ENCODE measurements at regions of chr2 and their contacts with region 1.

Region 1: DNA sequence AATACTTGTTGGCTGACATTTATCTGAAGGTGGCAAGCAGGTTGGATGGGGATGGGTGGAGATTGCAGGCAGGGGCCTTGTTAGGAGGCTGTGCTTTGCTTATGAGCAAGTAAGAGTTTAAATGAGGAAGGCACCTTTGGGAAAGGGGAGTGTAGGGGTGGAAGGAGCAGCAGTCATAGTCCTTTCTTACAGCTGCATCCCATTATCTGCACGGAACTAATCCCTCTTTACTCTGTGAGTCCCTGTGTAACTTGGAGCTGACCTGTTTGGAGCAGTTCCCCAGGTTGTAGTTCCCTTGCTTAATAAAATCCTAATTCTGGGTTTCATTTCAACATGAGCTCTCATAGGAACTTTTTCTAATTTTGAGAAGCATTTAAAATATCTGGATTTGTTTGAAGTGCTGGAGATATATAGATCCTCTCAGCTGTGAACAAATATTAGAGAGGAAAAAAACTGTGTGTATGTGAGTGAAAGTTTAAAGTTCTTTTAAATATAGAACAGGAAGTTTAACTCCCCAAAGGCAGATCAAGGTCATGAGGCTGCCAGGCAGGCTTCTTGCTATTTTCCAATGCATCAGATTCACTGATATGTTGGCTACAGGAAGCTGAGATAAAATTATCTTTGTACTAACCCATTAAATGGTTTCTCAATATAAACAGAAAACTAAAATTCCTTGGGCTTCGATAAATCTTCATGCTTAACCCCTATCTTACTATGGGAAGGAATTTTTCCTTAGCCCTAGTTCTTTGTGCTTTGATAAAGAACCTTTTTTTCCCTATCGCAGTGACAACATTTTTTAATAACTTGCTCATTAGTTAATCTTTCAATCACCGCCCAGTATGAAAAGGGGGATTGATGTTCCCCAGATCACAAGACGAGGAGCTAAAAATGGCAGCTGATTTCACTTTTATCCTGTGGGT is 104.6 kb upstream of the EML6 start:
- DNase-seq: no peak
- H3K4me3 ChIP-seq: no peak overlapping the region
- H3K4me3 Mint-ChIP-seq: peak overlapping the region in 3 of 8 donors; percentile 3 to 46 (median 37)
- H3K27ac ChIP-seq: no peak overlapping the region
- H3K27ac Mint-ChIP-seq: peak overlapping the region; percentile 10 to 89 (median 68)
- H3K4me1 ChIP-seq: peaks cover 17% of the 10 kb centered on the region
- H3K4me1 Mint-ChIP-seq: peaks cover 19 to 36% (median 24%) of the 10 kb centered on the region in 4 donors
- H3K27me3 ChIP-seq: no peaks in the 10 kb centered on the region
- H3K27me3 Mint-ChIP-seq: no peaks in the 10 kb centered on the region

Region 2: GRCh38 chr2:54295911-54296310 is 323.0 kb before region 1 on chr2:
- CTCF ChIA-PET with region 1: no interaction called
- POLR2A ChIA-PET with region 1: no interaction called
- intact Hi-C with region 1: no loop called
- DNase-seq: no peak
- H3K4me3 ChIP-seq: no peak overlapping the region
- H3K4me3 Mint-ChIP-seq: no peak overlapping the region
- H3K27ac ChIP-seq: no peak overlapping the region
- H3K27ac Mint-ChIP-seq: no peak overlapping the region
- H3K4me1 ChIP-seq: no peaks in the 10 kb centered on the region
- H3K4me1 Mint-ChIP-seq: peaks cover 0 to 1% (median 0%) of the 10 kb centered on the region in 4 donors
- H3K27me3 ChIP-seq: no peaks in the 10 kb centered on the region
- H3K27me3 Mint-ChIP-seq: no peaks in the 10 kb centered on the region

Region 3: DNA sequence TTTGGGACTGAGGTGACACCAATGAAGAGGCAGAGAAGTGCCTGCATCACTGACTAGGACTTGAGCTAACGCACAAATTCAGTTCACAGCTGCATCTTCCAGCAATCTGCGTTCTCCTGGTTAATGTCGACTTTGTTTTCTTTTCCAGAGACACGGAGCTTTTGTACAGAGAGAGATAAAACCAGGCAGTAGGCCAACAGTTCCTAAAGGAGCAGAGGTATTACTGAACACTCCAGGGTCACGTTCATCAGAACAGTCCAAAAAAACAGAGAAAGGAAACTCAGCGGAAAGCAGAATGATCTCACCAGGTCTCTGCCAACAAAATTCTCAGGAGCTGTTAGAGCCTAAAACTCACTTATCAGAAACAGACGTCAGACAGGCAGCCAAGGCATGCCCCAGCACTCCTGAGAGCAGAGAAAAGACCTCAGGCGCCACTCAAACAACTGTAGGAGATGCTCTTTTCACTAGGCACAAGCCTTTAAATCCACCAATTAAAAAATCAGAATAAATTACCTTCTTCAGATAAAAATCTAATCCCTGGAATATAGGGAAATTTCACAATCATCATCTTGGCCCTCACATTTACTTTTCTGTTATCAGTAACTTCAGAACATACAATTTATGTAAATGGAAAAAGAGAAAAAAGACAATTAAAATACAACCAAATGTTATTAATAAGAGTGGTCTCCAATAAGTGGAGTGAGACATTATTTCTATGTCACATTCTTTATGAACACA is 258.7 kb before region 1 on chr2:
- CTCF ChIA-PET with region 1: no interaction called
- POLR2A ChIA-PET with region 1: no interaction called
- intact Hi-C with region 1: no loop called
- DNase-seq: no peak
- H3K4me3 ChIP-seq: no peak overlapping the region
- H3K4me3 Mint-ChIP-seq: no peak overlapping the region
- H3K27ac ChIP-seq: no peak overlapping the region
- H3K27ac Mint-ChIP-seq: no peak overlapping the region
- H3K4me1 ChIP-seq: no peaks in the 10 kb centered on the region
- H3K4me1 Mint-ChIP-seq: no peaks in the 10 kb centered on the region
- H3K27me3 ChIP-seq: no peaks in the 10 kb centered on the region
- H3K27me3 Mint-ChIP-seq: peaks cover 15 to 17% of the 10 kb centered on the region in 2 donors

Region 4: DNA sequence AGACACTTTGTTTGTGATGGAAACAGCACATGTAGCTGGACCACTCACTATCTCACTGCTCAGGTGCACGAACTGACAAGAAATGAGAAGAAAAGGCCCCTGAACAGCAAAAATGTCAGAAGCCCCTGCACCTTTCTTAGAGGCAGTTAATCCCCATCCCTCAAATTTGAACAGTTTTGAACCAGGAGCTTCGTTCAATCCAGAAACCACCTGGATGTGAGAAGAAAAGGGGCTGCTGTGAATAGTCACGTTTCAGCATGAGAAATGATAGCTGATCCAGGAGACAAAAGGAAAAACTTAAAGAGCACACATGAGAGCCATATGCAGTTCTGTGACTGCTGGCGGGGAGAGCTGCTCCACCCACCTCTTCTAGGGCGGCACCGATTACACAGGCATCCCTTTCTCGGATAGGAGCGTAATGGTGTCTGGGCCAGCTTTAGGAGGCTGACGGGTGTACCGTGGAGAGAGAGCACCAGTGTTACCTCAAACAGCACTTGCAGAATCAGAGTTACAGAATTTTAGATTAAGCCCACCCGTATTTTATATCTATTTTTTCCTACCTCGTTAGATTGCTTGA is 12.4 kb before region 1 on chr2:
- CTCF ChIA-PET with region 1: interaction called, 3 read pairs
- POLR2A ChIA-PET with region 1: interaction called, 6 read pairs
- intact Hi-C with region 1: loop called (anchors 2 kb)
- DNase-seq: peak in 1 of 5 donors; percentile 52
- H3K4me3 ChIP-seq: no peak overlapping the region
- H3K4me3 Mint-ChIP-seq: peak overlapping the region in 7 of 8 donors; percentile 27 to 74 (median 63)
- H3K27ac ChIP-seq: no peak overlapping the region
- H3K27ac Mint-ChIP-seq: peak overlapping the region in 6 of 7 donors; percentile 63 to 93 (median 81)
- H3K4me1 ChIP-seq: peaks cover 66% of the 10 kb centered on the region
- H3K4me1 Mint-ChIP-seq: peaks cover 68 to 88% (median 81%) of the 10 kb centered on the region in 4 donors
- H3K27me3 ChIP-seq: no peaks in the 10 kb centered on the region
- H3K27me3 Mint-ChIP-seq: no peaks in the 10 kb centered on the region

Measured in CD4-positive, alpha-beta memory T cell (primary cell).